CD4-positive, alpha-beta T cell (primary cell): ENCODE measurements at regions of chr15 and their contacts with region 1.

Region 1: GRCh38 chr15:55196458-55197361 is at the start of gene RSL24D1:
- DNase-seq: peak; percentile 91 to 100 (median 95)
- ATAC-seq: peak; percentile 96
- H3K4me3 ChIP-seq: peak within 1 kb of the TSS; percentile 89
- H3K4me3 Mint-ChIP-seq: no peak within 1 kb of the TSS
- H3K27ac ChIP-seq: peak within 1 kb of the TSS; percentile 79 to 92
- H3K27ac Mint-ChIP-seq: no peak within 1 kb of the TSS
- H3K4me1 ChIP-seq: peaks cover 18% of the 10 kb centered on the region
- H3K4me1 Mint-ChIP-seq: peaks cover 21% of the 10 kb centered on the region
- H3K27me3 ChIP-seq: no peaks in the 10 kb centered on the region
- H3K27me3 Mint-ChIP-seq: no peaks in the 10 kb centered on the region
- CTCF ChIP-seq: peak; percentile 55
- total RNA-seq, gene RSL24D1: 163 to 164 TPM

Region 2: GRCh38 chr15:55221090-55222011 is 24.6 kb after region 1 on chr15:
- CTCF ChIA-PET with region 1: interaction called, 23 read pairs
- POLR2A ChIA-PET with region 1: interaction called, 8 read pairs
- intact Hi-C with region 1: loop called in 1 of 2 experiments (anchors 2 kb)
- DNase-seq: peak in 3 of 14 experiments; percentile 41 to 49 (median 48)
- ATAC-seq: no peak
- H3K4me3 ChIP-seq: no peak overlapping the region
- H3K4me3 Mint-ChIP-seq: no peak overlapping the region
- H3K27ac ChIP-seq: no peak overlapping the region
- H3K27ac Mint-ChIP-seq: peak overlapping the region; percentile 18
- H3K4me1 ChIP-seq: peaks cover 47% of the 10 kb centered on the region
- H3K4me1 Mint-ChIP-seq: peaks cover 66% of the 10 kb centered on the region
- H3K27me3 ChIP-seq: no peaks in the 10 kb centered on the region
- H3K27me3 Mint-ChIP-seq: no peaks in the 10 kb centered on the region
- CTCF ChIP-seq: no peak

Region 3: GRCh38 chr15:55267401-55268175 is 70.9 kb after region 1 on chr15:
- CTCF ChIA-PET with region 1: no interaction called
- POLR2A ChIA-PET with region 1: interaction called, 17 read pairs
- intact Hi-C with region 1: no loop called
- DNase-seq: peak; percentile 51 to 92 (median 66)
- ATAC-seq: peak; percentile 90
- H3K4me3 ChIP-seq: peak overlapping the region; percentile 45
- H3K4me3 Mint-ChIP-seq: peak overlapping the region; percentile 70
- H3K27ac ChIP-seq: peak overlapping the region; percentile 52 to 82
- H3K27ac Mint-ChIP-seq: peak overlapping the region; percentile 89
- H3K4me1 ChIP-seq: peaks cover 42% of the 10 kb centered on the region
- H3K4me1 Mint-ChIP-seq: peaks cover 60% of the 10 kb centered on the region
- H3K27me3 ChIP-seq: no peaks in the 10 kb centered on the region
- H3K27me3 Mint-ChIP-seq: no peaks in the 10 kb centered on the region
- CTCF ChIP-seq: no peak

Region 4: DNA sequence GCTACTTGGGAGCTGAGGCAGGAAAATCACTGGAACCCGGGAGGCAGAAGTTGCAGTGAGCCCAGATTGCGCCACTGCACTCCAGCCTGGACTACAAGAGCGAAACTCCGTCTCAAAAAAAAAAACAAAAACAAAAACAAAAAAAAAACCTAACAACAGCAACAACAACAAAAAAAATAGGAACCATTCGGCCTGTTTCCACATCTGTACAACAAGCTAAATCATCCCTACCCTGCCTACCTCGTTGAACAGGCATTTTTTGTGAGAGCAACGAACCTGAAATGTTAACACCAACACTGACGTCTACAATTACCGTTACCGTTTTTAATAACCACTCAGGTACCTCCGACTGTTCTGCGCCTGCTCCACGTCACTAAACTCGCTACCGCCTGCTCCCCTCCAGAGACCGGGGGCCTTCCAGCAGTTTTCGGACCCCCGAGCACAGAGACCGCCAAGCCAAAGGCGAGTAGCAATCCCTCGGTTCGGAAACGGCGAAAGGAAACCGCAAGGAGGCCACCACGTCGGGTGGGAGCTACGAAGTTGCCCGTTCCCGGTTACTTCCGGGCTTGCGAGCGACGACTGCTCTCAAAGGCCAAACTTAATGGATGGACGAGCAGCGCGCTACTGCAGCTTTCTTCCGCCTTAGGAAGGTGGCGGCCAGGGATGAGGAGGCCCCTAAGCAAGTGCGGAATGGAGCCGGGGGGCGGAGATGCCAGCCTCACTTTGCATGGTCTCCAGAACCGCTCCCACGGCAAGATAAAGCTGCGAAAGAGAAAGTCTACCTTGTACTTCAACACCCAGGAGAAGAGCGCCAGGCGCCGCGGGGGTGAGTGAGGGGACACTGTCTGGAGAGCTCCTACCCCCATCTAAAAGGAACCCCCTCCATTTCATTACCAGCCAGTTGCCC is 122.1 kb after region 1 on chr15 and contains the starts of genes PIGB and PIGBOS1:
- CTCF ChIA-PET with region 1: interaction called, 10 read pairs
- POLR2A ChIA-PET with region 1: interaction called, 60 read pairs
- intact Hi-C with region 1: loop called in 1 of 2 experiments (anchors 1 kb)
- DNase-seq: peak; percentile 62 to 90 (median 70)
- ATAC-seq: peak; percentile 90
- H3K4me3 ChIP-seq: peak within 1 kb of the TSS; percentile 69
- H3K4me3 Mint-ChIP-seq: peak within 1 kb of the TSS; percentile 99
- H3K27ac ChIP-seq: peak within 1 kb of the TSS; percentile 88 to 93
- H3K27ac Mint-ChIP-seq: peak within 1 kb of the TSS; percentile 100
- H3K4me1 ChIP-seq: peaks cover 33% of the 10 kb centered on the region
- H3K4me1 Mint-ChIP-seq: peaks cover 80% of the 10 kb centered on the region
- H3K27me3 ChIP-seq: no peaks in the 10 kb centered on the region
- H3K27me3 Mint-ChIP-seq: no peaks in the 10 kb centered on the region
- CTCF ChIP-seq: no peak
- total RNA-seq, gene PIGB: 21.5 to 21.6 TPM
- total RNA-seq, gene PIGBOS1: 6.2 to 10.1 TPM

Region 5: GRCh38 chr15:55457401-55458022 is 260.8 kb after region 1 on chr15:
- CTCF ChIA-PET with region 1: no interaction called
- POLR2A ChIA-PET with region 1: no interaction called
- intact Hi-C with region 1: no loop called
- DNase-seq: no peak
- ATAC-seq: no peak
- H3K4me3 ChIP-seq: no peak overlapping the region
- H3K4me3 Mint-ChIP-seq: no peak overlapping the region
- H3K27ac ChIP-seq: no peak overlapping the region
- H3K27ac Mint-ChIP-seq: no peak overlapping the region
- H3K4me1 ChIP-seq: no peaks in the 10 kb centered on the region
- H3K4me1 Mint-ChIP-seq: no peaks in the 10 kb centered on the region
- H3K27me3 ChIP-seq: peaks cover 0 to 3% of the 10 kb centered on the region in 2 experiments
- H3K27me3 Mint-ChIP-seq: no peaks in the 10 kb centered on the region
- CTCF ChIP-seq: no peak